ENCODE measurements at regions of chr5 and their contacts with region 1.

Region 1: DNA sequence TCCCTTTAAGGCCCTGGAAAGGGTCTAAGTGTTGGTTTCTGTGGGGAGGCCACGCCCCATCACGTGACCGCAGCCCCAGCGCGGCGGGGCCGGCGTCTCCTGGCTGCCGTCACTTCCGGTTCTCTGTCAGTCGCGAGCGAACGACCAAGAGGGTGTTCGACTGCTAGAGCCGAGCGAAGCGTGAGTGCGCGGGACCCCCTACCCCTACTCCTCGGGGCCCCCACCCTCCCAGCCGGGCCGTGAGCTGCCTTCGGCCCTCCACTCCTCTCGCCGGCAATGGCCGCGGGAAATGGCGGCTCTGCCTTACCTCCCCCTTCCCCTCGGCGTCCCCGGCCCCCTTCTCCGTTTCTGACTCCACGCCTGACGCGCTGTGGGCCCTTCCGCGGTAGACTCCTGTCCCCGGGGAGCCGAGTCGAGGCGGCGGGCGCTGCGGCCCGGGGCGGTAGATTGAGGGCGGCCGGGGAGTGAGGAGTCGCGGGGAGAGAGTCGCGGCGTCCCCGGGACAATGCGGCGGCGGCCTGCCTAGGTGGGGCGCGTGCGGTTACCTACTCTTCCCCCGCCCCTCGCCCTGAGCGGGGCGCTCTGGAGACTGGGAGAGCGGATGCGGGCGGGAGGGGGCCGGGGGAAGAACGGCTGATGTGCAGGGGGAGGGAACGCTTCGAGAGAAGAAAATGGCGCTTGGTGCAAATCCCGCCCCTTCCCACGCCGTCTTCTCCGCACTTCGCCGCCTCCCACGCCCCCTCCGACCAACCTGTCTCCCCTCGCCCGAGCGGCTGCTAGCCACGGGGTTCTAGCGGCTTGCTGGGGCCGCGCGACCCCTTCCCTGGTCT is at the start of gene SUB1:
- DNase-seq: peak; percentile 91 to 99 (median 94)

Region 2: GRCh38 chr5:31408814-31409213 is 1176.8 kb before region 1 on chr5:
- intact Hi-C with region 1: no loop called
- DNase-seq: no peak

Region 3: DNA sequence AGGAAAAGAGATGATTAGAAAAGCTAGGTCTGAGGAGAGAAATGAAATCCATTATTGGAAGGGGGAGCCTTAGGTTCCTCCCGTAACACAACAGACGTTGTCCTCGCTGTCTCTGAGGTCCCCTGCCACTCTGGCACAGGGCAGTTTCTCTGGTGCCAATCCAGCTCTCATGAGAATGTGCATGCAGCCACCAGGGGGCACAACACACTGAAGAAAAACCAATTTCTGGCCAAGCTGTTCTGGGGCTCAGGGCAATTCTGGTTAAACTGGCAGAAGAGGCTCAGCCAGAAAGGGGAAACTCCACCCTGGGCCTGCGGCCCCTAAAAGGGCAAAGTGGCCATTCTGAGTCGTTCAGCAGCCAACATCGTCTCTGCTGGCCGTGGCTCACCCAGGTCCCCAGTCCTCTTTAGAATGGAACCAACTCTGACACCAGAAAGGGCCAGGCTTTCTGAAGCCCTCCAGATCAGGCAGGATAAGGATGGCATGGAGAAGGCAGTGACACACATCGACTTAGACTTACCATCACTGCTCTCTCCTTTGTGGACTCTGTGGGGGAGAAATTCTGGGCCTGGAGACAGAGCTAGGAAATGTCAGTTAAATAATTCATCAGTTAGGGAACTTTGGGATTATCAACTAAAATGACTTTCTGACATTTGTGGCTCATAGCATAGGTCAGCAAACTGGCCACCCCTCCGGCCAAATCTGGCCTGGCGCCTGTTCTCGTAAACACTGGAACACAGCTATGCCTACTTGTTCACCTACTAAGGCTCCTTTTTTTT is 353.0 kb before region 1 on chr5:
- intact Hi-C with region 1: loop called (anchors 2 kb)
- DNase-seq: peak; percentile 65 to 96 (median 86)

Region 4: GRCh38 chr5:32388432-32389129 is 197.1 kb before region 1 on chr5:
- intact Hi-C with region 1: loop called (anchors 10 kb)
- DNase-seq: no peak

Region 5: GRCh38 chr5:32489791-32490582 is 95.7 kb before region 1 on chr5:
- intact Hi-C with region 1: loop called (anchors 1 kb)
- DNase-seq: peak; percentile 23 to 93 (median 78)

Region 6: DNA sequence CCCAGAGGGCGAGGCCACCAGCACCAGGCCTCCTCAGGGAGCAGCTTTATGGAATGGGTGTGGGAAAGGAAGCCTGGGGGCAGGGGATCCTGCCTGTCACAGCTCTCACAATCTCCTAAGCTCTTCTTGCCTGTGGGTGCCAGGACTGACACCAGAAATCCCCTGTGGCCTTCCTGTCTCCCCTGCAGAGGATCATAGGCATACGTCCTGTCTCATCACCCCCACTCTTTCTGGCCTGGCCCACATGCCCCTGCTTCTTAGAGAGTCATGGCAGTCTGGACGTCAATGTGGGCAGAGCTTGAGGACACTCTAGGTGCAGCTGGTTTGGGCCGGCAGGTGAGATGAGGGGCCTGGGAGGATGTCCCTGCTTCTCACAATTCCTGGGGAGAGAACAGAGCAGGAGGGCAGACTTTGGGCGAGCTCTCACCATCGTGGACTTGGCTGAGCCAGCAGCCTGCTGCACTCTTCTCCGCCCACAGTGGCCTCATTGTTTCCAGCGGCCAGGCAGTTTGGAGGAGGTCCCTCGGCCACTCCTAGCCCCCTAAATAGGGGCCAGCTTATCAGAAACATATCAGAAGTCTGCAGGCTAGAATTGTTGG is 73.8 kb before region 1 on chr5:
- intact Hi-C with region 1: loop called (anchors 2 kb)
- DNase-seq: no peak

Region 7: DNA sequence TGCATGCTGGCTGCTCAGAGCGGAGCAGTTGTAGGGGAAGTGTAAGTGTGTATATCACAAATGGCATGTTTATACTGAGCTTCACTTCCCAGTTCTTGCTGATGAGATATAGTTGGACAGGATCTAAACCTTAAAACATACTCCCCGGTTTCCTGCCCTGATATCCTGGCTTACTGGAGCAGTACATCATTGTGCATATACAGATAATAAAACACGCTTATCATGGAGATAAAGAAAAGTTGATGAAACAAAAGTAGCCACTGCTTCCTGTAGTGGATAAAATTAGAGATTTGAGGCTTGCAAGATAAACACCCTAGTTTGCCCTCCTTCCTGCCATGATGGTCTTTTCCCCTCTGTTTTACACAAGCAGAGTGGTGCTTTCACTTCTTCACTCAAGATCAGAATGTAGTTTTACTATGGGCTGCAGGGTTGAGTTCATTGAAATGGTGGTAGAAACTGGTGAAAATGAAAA is 140.5 kb after region 1 on chr5:
- intact Hi-C with region 1: no loop called
- DNase-seq: no peak